ENCODE measurements at regions of chr4 and their contacts with region 1.

Region 1: DNA sequence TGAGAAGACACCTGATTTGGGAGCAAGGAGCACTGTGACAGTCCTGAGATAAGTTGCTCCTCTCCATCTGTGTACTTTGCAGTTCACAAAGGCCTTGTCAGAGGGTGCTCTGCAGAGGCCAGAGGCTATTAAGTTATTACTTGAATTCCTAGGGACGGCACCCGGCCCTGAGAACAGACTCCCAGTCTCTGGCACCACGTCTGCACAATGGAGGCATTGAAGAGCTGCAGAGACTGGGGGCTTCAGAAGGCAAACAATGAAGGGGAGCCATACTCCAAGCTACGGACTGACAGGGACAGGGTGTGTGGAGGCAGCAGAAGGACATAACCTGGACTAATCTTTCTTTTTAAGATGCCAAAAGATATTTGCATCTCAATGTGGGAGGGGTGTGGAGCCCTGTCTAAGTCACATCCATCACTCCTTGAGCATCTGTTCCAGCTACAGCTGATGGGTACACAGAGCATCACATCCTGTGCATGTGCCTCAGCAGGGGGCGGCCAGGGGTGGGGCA is 11.5 kb downstream of the RASGEF1B start:
- DNase-seq: no peak
- H3K4me3 ChIP-seq: no peak overlapping the region
- H3K27ac ChIP-seq: no peak overlapping the region
- H3K4me1 ChIP-seq: no peaks in the 10 kb centered on the region
- H3K27me3 ChIP-seq: no peaks in the 10 kb centered on the region
- CTCF ChIP-seq: no peak

Region 2: GRCh38 chr4:81549984-81550383 is 89.7 kb after region 1 on chr4:
- intact Hi-C with region 1: loop called (anchors 5 kb)
- DNase-seq: no peak
- H3K4me3 ChIP-seq: no peak overlapping the region
- H3K27ac ChIP-seq: no peak overlapping the region
- H3K4me1 ChIP-seq: peaks cover 0 to 3% (median 0%) of the 10 kb centered on the region in 4 donors
- H3K27me3 ChIP-seq: no peaks in the 10 kb centered on the region
- CTCF ChIP-seq: no peak

Region 3: DNA sequence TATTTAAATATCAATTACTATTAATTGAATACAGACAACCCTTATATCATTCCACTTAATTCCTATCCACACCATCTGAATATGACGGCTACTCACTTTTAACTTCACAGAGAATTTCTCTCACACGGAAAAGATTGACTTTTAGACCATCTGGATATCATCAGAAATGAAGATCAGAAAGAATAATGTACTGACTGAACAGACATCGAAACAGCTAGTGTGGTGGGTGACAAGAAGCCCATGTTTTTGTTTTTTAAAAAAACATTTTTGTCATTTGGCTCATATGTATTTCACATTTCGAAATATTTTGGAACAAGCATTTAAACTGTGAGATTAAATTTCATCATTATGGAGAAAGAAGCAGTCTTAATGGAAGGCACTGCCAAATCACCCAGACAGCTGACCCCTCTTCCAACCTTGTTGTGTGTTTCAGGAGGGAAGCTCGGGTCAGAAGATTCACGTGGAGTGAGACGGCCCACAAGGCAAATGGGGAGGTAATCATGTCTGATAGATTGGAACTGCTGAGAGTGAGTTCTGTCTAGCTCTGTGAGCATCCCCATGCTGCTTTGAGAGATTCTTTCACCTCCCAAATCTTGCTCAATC is 215.6 kb after region 1 on chr4:
- intact Hi-C with region 1: no loop called
- DNase-seq: peak; percentile 38 to 66
- H3K4me3 ChIP-seq: no peak overlapping the region
- H3K27ac ChIP-seq: no peak overlapping the region
- H3K4me1 ChIP-seq: no peaks in the 10 kb centered on the region
- H3K27me3 ChIP-seq: no peaks in the 10 kb centered on the region
- CTCF ChIP-seq: no peak

Region 4: GRCh38 chr4:81786063-81786763 is 326.0 kb after region 1 on chr4:
- intact Hi-C with region 1: no loop called
- DNase-seq: no peak
- H3K4me3 ChIP-seq: no peak overlapping the region
- H3K27ac ChIP-seq: no peak overlapping the region
- H3K4me1 ChIP-seq: peaks cover 0 to 14% (median 3%) of the 10 kb centered on the region in 4 donors
- H3K27me3 ChIP-seq: no peaks in the 10 kb centered on the region
- CTCF ChIP-seq: no peak

Region 5: DNA sequence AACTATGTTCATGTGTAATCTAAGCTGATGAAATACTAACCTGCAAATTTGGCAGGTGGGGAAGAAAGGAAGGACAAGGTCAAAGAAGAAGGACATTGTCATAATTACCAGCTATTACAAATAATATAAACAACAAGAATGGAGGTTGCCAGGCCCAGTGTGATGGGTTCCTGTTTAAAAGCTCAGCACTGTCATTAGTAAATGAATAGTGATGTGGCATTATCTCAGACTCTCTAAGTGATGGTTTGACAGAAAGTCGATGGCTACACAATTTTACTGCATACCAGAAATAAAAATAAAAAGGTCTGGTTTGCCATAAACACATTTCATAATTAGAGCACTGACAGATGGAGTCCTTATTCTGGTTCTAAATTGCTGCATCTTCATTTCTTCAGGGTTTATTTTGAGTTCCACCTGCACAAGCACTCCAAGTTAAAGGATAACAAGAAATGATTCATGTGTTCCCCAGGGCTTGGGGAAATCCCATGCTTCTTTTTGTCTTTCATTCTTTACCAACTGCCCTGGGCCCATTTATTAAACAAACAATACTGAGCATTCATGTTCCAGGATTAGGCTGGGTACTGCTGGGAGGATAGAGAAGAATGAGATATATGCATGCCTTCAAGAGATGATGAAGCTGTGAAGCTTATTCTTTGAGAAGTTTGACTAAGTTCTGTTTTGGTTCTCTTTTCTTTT is 379.2 kb after region 1 on chr4:
- intact Hi-C with region 1: loop called (anchors 5 kb)
- DNase-seq: no peak
- H3K4me3 ChIP-seq: no peak overlapping the region
- H3K27ac ChIP-seq: no peak overlapping the region
- H3K4me1 ChIP-seq: no peaks in the 10 kb centered on the region
- H3K27me3 ChIP-seq: no peaks in the 10 kb centered on the region
- CTCF ChIP-seq: no peak